ENCODE measurements at regions of chr7 and their contacts with region 1.

Region 1: GRCh38 chr7:43729214-43729923 is at the start of gene COA1:
- DNase-seq: peak; percentile 88
- H3K4me3 ChIP-seq: peak within 1 kb of the TSS; percentile 89
- H3K27ac ChIP-seq: peak within 1 kb of the TSS; percentile 93
- H3K4me1 ChIP-seq: peaks cover 59% of the 10 kb centered on the region
- H3K27me3 ChIP-seq: no peaks in the 10 kb centered on the region
- CTCF ChIP-seq: peak; percentile 32
- total RNA-seq, gene COA1: 76.5 TPM

Region 2: DNA sequence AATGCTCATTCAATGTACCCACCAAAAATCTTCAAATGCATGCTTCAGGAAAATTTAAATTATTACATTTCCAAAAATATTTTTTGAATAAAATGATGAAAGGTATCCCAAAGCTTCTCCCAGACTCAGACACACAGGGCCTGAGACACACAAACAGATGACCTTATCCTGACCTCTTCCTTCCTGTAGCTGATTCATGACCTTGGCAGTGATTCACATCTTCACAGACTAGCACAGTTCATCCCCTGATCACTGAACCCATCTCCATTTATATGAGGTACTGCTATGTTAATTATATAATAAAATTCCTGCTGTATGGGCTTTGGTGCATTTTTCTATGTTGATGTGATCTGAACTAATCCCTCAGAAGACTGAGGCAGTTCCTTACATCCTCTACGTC is 1227.3 kb before region 1 on chr7:
- intact Hi-C with region 1: no loop called
- DNase-seq: no peak
- H3K4me3 ChIP-seq: no peak overlapping the region
- H3K27ac ChIP-seq: no peak overlapping the region
- H3K4me1 ChIP-seq: no peaks in the 10 kb centered on the region
- H3K27me3 ChIP-seq: peaks cover 10% of the 10 kb centered on the region
- CTCF ChIP-seq: no peak

Region 3: GRCh38 chr7:43692582-43693373 is 36.6 kb before region 1 on chr7:
- intact Hi-C with region 1: no loop called
- DNase-seq: no peak
- H3K4me3 ChIP-seq: no peak overlapping the region
- H3K27ac ChIP-seq: no peak overlapping the region
- H3K4me1 ChIP-seq: peaks cover 18% of the 10 kb centered on the region
- H3K27me3 ChIP-seq: no peaks in the 10 kb centered on the region
- CTCF ChIP-seq: no peak

Region 4: GRCh38 chr7:43834463-43835251 is 105.3 kb after region 1 on chr7:
- intact Hi-C with region 1: loop called (anchors 10 kb)
- DNase-seq: no peak
- H3K4me3 ChIP-seq: peak overlapping the region; percentile 38
- H3K27ac ChIP-seq: no peak overlapping the region
- H3K4me1 ChIP-seq: peaks cover 9% of the 10 kb centered on the region
- H3K27me3 ChIP-seq: peaks cover 17% of the 10 kb centered on the region
- CTCF ChIP-seq: no peak

Region 5: GRCh38 chr7:43890506-43890905 is 161.1 kb after region 1 on chr7:
- intact Hi-C with region 1: no loop called
- DNase-seq: no peak
- H3K4me3 ChIP-seq: no peak overlapping the region
- H3K27ac ChIP-seq: no peak overlapping the region
- H3K4me1 ChIP-seq: peaks cover 63% of the 10 kb centered on the region
- H3K27me3 ChIP-seq: no peaks in the 10 kb centered on the region
- CTCF ChIP-seq: no peak

Measured in left ventricle myocardium inferior (tissue), 1 donor.